ENCODE measurements at regions of chr13 and their contacts with region 1.

Region 1: DNA sequence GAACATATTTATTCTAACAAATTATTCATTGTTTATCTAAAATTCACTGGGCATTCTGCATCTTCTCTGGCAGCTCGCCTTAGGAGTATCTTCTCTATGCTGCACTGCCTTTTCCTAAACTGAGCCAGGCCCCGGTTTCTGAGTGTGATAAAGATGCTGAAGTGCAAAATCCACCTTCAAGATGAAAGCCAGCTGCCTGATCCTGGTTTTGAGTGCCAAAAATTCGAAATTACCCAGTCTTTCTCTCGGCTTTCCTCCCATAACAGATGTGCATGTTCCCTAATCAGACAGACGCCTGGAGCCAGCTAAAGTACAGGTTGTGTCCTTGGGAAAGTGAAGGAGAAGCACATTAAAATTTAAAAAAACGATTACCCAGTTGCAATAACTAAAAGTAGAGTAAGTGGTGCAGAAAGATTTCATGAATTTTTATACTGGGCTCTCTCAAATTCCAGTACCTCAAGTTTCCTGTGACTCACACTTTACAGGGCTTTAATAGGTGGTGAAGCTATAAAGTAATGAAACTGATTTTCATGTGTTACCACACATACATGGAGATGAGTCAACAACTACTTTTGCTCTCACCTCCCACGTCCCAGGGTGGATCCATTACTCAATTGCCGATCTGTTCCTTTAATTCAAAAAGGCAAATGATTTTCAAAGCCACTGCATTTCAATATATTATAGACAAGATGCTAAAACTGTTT is 65.0 kb upstream of the GTF2F2 start:
- DNase-seq: peak; percentile 89
- ATAC-seq: peak; percentile 98
- H3K4me3 Mint-ChIP-seq: peak overlapping the region; percentile 2
- H3K27ac Mint-ChIP-seq: no peak overlapping the region
- H3K4me1 Mint-ChIP-seq: peaks cover 25% of the 10 kb centered on the region
- H3K27me3 Mint-ChIP-seq: peaks cover 35% of the 10 kb centered on the region
- CTCF ChIP-seq: no peak

Region 2: GRCh38 chr13:44815623-44816022 is 239.7 kb before region 1 on chr13:
- CTCF ChIA-PET with region 1: no interaction called
- POLR2A ChIA-PET with region 1: no interaction called
- intact Hi-C with region 1: no loop called
- DNase-seq: peak; percentile 39
- ATAC-seq: peak; percentile 52
- H3K4me3 Mint-ChIP-seq: no peak overlapping the region
- H3K27ac Mint-ChIP-seq: no peak overlapping the region
- H3K4me1 Mint-ChIP-seq: peaks cover 20% of the 10 kb centered on the region
- H3K27me3 Mint-ChIP-seq: peaks cover 17% of the 10 kb centered on the region
- CTCF ChIP-seq: no peak

Region 3: GRCh38 chr13:45109102-45109720 is 53.9 kb after region 1 on chr13:
- CTCF ChIA-PET with region 1: no interaction called
- POLR2A ChIA-PET with region 1: no interaction called
- intact Hi-C with region 1: loop called (anchors 10 kb)
- DNase-seq: peak; percentile 63
- ATAC-seq: peak; percentile 95
- H3K4me3 Mint-ChIP-seq: no peak overlapping the region
- H3K27ac Mint-ChIP-seq: peak overlapping the region; percentile 56
- H3K4me1 Mint-ChIP-seq: peaks cover 7% of the 10 kb centered on the region
- H3K27me3 Mint-ChIP-seq: peaks cover 15% of the 10 kb centered on the region
- CTCF ChIP-seq: no peak

Region 4: DNA sequence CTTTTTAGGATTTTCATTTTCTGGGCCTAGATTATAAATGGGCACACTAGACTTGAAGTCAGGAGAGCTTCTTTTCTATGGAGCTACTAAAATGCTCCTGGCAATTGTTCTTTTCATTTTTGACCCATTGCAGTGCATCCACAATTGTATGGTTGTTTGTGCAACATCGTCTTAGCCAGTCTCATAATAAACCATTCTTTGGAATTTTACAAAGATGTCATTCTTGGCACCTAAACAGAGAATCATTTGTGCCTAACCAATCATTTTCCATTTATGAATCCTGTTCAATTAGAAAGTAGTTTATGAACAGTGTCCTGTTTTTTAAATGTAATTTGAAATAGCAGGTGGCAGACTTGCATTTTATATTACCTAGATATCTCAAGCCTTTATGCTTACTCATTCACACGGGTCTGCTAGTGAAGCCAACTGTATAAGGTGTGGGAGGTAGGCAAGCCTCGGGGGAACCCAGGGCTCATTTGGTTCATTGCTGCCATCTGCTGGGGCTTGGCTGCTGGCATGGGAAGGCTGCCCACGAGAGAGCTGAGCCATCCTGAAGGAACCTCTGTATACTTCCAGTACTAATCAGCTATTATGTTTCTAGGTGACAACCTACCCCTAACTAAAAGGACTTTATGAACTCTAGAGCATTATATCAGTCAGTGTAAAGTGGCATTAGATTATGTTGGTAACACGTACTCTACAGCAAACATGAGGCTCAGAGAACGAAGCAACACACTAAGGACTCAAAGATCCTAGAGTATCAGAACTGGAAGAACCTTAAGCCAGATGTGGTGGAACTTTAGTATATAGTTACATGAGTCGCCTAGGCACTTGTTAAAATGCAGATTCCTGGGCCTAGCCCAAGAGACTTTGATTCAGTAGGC is 225.6 kb after region 1 on chr13:
- CTCF ChIA-PET with region 1: interaction called, 12 read pairs
- POLR2A ChIA-PET with region 1: no interaction called
- intact Hi-C with region 1: no loop called
- DNase-seq: peak; percentile 81
- ATAC-seq: peak; percentile 96
- H3K4me3 Mint-ChIP-seq: no peak overlapping the region
- H3K27ac Mint-ChIP-seq: no peak overlapping the region
- H3K4me1 Mint-ChIP-seq: peaks cover 9% of the 10 kb centered on the region
- H3K27me3 Mint-ChIP-seq: no peaks in the 10 kb centered on the region
- CTCF ChIP-seq: peak; percentile 71